ENCODE measurements at regions of chr2 and their contacts with region 1.

Region 1: DNA sequence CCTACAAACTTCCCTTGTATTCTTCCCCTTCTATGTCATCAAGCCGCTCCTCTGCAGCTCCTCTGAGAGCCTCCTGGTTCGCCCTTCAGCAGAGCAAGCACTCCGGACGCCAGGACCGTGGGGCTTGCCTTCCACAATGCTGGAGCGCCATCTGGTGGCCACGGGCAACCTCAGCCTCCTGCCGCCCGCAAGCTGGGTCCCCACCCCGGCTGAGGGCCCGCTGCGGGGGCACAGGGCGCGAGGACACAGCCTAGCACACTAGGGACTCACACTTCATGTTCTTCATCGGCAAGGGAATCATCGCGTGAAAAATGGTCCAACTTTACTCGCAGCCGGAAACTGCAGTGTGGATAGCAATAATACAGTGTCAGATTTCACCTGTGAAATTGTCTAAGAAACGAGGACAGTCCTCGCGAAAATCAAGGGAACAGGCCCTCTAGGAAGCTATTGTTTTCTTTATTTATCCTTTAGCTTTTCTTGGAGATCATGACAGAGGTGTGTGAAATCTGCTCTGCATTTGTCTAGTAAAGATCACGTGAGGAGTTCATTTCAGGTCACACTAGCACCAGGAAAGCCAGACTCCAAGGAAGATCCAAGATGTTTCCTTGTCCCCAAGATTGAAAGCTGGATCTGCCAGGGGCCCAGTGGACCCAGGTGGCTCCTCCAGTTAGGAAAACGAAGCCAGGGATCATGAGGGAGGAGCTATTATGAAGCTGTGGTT is 5.8 kb downstream of the PRLH start:
- DNase-seq: peak; percentile 91 to 95 (median 93)
- ATAC-seq: peak; percentile 83 to 94 (median 90)
- H3K4me3 ChIP-seq: peak overlapping the region in 3 of 12 donors; percentile 3 to 31 (median 22)
- H3K27ac ChIP-seq: no peak overlapping the region
- H3K4me1 ChIP-seq: peaks cover 0 to 29% (median 12%) of the 10 kb centered on the region in 12 donors
- H3K27me3 ChIP-seq: no peaks in the 10 kb centered on the region
- CTCF ChIP-seq: peak; percentile 95 to 100 (median 98)
- POLR2A ChIP-seq: no peak

Region 2: GRCh38 chr2:237092920-237093781 is 479.0 kb before region 1 on chr2:
- intact Hi-C with region 1: loop called in 6 of 10 experiments (anchors 5 to 10 kb)
- DNase-seq: peak in 3 of 5 donors; percentile 40 to 52 (median 43)
- ATAC-seq: peak; percentile 55 to 82 (median 77)
- H3K4me3 ChIP-seq: no peak overlapping the region
- H3K27ac ChIP-seq: peak overlapping the region in 5 of 12 donors; percentile 18 to 56 (median 53)
- H3K4me1 ChIP-seq: peaks cover 0 to 35% (median 19%) of the 10 kb centered on the region in 12 donors
- H3K27me3 ChIP-seq: no peaks in the 10 kb centered on the region
- CTCF ChIP-seq: peak; percentile 14 to 62 (median 48)
- POLR2A ChIP-seq: no peak

Region 3: DNA sequence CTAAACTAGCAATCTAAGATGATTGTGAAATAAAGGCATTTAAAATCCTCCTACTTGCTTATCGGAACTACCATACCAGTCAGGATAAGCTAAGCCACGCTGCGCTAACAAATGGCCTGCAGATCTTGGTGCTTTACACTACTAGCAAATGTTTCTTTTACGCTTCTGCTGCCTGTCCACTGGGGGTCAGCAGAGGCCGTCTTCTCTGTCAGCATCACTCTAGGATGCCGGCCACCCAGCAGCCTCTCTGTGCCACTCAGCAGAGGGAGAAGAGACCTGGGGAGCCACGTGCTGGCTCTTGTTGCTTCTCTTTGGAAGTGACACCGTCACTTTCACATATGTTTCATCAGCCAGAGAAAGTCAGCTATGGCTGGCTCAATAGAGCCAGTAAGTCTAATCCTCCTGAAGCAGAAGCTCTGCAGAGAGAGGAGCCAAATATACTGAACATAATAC is 449.9 kb before region 1 on chr2:
- intact Hi-C with region 1: loop called in 4 of 10 experiments (anchors 2 to 10 kb)
- DNase-seq: peak; percentile 55 to 83 (median 64)
- ATAC-seq: peak in 3 of 4 donors; percentile 76 to 92 (median 85)
- H3K4me3 ChIP-seq: no peak overlapping the region
- H3K27ac ChIP-seq: no peak overlapping the region
- H3K4me1 ChIP-seq: peaks cover 0 to 13% (median 0%) of the 10 kb centered on the region in 12 donors
- H3K27me3 ChIP-seq: no peaks in the 10 kb centered on the region
- CTCF ChIP-seq: peak; percentile 47 to 78 (median 68)
- POLR2A ChIP-seq: no peak

Region 4: DNA sequence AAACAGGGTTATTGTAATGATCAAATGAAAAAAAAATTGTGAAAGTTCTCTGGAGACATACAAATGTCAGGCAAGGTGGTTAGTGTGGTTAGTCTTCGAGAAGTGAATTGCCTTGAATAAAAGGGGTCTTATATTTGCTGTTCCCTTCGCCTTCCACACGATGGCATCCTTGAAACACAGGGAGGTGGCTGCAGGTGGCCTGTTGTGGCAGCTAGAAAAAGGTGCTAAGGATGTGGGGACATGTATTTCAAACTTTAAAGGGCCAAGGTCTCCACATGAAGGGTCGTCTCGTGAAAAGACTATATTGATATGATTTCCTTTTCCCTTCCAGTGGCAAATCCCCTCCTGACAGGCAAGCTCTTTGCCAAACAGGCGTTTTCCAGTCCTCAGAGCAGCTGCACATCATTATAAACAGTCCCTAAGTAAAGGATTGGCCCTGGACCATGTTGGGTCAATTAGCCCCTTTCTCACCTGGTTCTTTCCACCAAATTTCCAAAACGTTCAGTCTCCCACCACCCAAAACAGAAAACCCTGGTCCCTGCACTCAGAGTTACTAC is 418.0 kb before region 1 on chr2:
- intact Hi-C with region 1: loop called in 1 of 10 experiments (anchors 5 kb)
- DNase-seq: peak in 1 of 5 donors; percentile 45
- ATAC-seq: peak in 1 of 4 donors; percentile 22
- H3K4me3 ChIP-seq: no peak overlapping the region
- H3K27ac ChIP-seq: peak overlapping the region in 3 of 12 donors; percentile 55 to 77 (median 76)
- H3K4me1 ChIP-seq: peaks cover 0 to 33% (median 3%) of the 10 kb centered on the region in 12 donors
- H3K27me3 ChIP-seq: no peaks in the 10 kb centered on the region
- CTCF ChIP-seq: peak; percentile 44 to 68 (median 58)
- POLR2A ChIP-seq: no peak

Region 5: GRCh38 chr2:237421542-237422116 is 150.6 kb before region 1 on chr2:
- intact Hi-C with region 1: loop called in 7 of 10 experiments (anchors 2 to 10 kb)
- DNase-seq: peak; percentile 73 to 86 (median 75)
- ATAC-seq: peak; percentile 73 to 91 (median 87)
- H3K4me3 ChIP-seq: peak overlapping the region in 7 of 12 donors; percentile 5 to 39 (median 23)
- H3K27ac ChIP-seq: peak overlapping the region in 7 of 12 donors; percentile 0 to 71 (median 41)
- H3K4me1 ChIP-seq: peaks cover 0 to 28% (median 13%) of the 10 kb centered on the region in 12 donors
- H3K27me3 ChIP-seq: no peaks in the 10 kb centered on the region
- CTCF ChIP-seq: peak; percentile 72 to 97 (median 82)
- POLR2A ChIP-seq: no peak

Region 6: GRCh38 chr2:237474931-237475703 is 97.1 kb before region 1 on chr2:
- intact Hi-C with region 1: loop called in 1 of 10 experiments (anchors 2 kb)
- DNase-seq: peak; percentile 83 to 93 (median 87)
- ATAC-seq: peak; percentile 43 to 88 (median 80)
- H3K4me3 ChIP-seq: peak overlapping the region; percentile 49 to 98 (median 76)
- H3K27ac ChIP-seq: peak overlapping the region; percentile 76 to 98 (median 94)
- H3K4me1 ChIP-seq: peaks cover 0 to 34% (median 17%) of the 10 kb centered on the region in 12 donors
- H3K27me3 ChIP-seq: peaks cover 0 to 18% (median 0%) of the 10 kb centered on the region in 9 donors
- CTCF ChIP-seq: peak; percentile 84 to 98 (median 93)
- POLR2A ChIP-seq: peak in 1 of 2 donors; percentile 57

Measured in heart left ventricle (tissue), 16 donors.